CD8-positive, alpha-beta T cell (primary cell): ENCODE measurements at regions of chr20 and their contacts with region 1.

Region 1: GRCh38 chr20:63537525-63538203 is 488 bp upstream of the PTK6 start:
- DNase-seq: peak; percentile 84 to 97 (median 92)
- ATAC-seq: peak; percentile 90
- H3K4me3 ChIP-seq: peak overlapping the region; percentile 48 to 53
- H3K4me3 Mint-ChIP-seq: peak overlapping the region; percentile 75
- H3K27ac ChIP-seq: peak overlapping the region; percentile 34 to 84
- H3K27ac Mint-ChIP-seq: peak overlapping the region; percentile 81
- H3K4me1 ChIP-seq: peaks cover 22% of the 10 kb centered on the region
- H3K4me1 Mint-ChIP-seq: peaks cover 14% of the 10 kb centered on the region
- H3K27me3 ChIP-seq: no peaks in the 10 kb centered on the region
- H3K27me3 Mint-ChIP-seq: no peaks in the 10 kb centered on the region
- CTCF ChIP-seq: peak; percentile 91

Region 2: DNA sequence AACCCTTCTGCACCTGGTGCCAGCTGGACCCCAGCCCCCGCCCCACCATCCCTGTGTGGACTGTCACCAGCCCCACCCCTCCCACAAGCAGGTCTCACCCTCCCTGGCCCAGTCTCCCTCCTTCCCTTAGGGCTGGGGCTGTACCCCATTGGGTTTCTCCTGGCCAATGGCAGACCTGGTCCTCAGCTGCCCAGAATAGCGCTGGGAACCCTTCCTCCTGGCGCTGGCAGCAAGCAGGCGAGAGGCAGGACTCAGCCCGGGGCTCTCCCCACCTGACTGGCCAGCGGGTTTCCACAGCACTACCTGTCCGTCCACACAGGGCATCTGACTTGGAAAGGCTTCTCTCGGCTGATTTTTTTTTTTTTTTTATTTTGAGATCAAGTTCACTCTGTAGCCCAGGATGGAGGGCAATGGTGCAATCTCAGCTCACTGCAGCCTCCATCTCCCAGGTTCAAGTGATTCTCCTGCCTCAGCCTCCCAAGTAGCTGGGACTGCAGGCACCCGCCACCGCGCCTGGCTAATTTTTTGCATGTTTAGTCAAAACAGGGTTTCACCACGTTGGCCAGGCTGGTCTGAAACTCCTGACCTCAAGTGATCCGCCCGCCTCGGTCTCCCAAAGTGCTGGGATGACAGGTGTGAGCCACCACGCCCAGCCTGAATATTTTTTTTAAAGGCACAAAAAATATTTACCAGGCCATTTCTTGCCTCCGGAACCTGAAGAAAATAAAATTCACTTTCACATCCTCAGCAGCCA is 154.9 kb before region 1 on chr20:
- CTCF ChIA-PET with region 1: no interaction called
- POLR2A ChIA-PET with region 1: no interaction called
- intact Hi-C with region 1: no loop called
- DNase-seq: peak in 1 of 9 experiments; percentile 14
- ATAC-seq: no peak
- H3K4me3 ChIP-seq: no peak overlapping the region
- H3K4me3 Mint-ChIP-seq: no peak overlapping the region
- H3K27ac ChIP-seq: no peak overlapping the region
- H3K27ac Mint-ChIP-seq: no peak overlapping the region
- H3K4me1 ChIP-seq: no peaks in the 10 kb centered on the region
- H3K4me1 Mint-ChIP-seq: no peaks in the 10 kb centered on the region
- H3K27me3 ChIP-seq: no peaks in the 10 kb centered on the region
- H3K27me3 Mint-ChIP-seq: peaks cover 9% of the 10 kb centered on the region
- CTCF ChIP-seq: no peak

Region 3: GRCh38 chr20:63567386-63568169 is 29.9 kb after region 1 on chr20:
- CTCF ChIA-PET with region 1: interaction called, 24 read pairs
- POLR2A ChIA-PET with region 1: interaction called, 5 read pairs
- intact Hi-C with region 1: no loop called
- DNase-seq: peak; percentile 32 to 83 (median 62)
- ATAC-seq: peak; percentile 65
- H3K4me3 ChIP-seq: peak overlapping the region; percentile 34 to 59
- H3K4me3 Mint-ChIP-seq: peak overlapping the region; percentile 77
- H3K27ac ChIP-seq: peak overlapping the region; percentile 23 to 56
- H3K27ac Mint-ChIP-seq: peak overlapping the region; percentile 49
- H3K4me1 ChIP-seq: peaks cover 25% of the 10 kb centered on the region
- H3K4me1 Mint-ChIP-seq: peaks cover 21% of the 10 kb centered on the region
- H3K27me3 ChIP-seq: peaks cover 0 to 3% of the 10 kb centered on the region in 2 experiments
- H3K27me3 Mint-ChIP-seq: no peaks in the 10 kb centered on the region
- CTCF ChIP-seq: no peak

Region 4: DNA sequence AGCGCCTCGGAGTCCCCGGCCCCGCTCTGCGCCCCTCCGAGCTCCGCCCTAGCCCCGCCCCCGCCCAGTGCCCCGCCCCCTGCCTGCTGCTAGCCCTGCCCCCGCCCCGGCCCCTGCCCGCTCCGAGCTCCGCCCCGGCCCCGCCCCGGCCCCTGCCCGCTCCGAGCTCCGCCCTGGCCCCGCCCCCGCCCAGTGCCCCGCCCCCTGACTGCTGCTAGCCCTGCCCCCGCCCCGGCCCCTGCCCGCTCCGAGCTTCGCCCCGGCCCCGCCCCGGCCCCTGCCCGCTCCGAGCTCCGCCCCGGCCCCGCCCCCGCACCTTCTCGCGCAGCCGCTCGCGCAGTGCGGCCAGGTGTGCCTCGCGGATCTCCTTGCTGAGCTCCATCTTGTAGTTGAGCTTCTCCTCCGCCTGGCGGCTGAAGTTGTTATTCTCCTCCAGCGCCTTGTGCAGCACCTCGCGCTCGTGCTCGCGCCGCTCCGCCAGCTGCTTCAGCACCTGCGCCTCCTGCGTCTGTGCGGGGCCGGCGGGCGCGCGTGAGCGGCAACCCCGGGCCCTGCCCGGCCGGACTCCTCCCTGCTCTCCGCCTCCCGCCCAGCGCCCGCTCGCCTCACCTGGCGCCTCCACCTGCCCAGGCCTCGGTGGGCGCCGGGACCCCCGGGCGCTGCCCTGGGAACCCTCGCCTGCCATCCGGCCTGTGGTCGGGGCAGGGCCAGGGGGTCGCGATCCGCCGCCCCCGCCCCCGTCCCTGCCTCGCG is 104.3 kb after region 1 on chr20:
- CTCF ChIA-PET with region 1: interaction called, 19 read pairs
- POLR2A ChIA-PET with region 1: interaction called, 11 read pairs
- intact Hi-C with region 1: loop called (anchors 1 to 2 kb)
- DNase-seq: peak; percentile 96 to 99 (median 97)
- ATAC-seq: peak; percentile 67
- H3K4me3 ChIP-seq: peak overlapping the region; percentile 90 to 98
- H3K4me3 Mint-ChIP-seq: peak overlapping the region; percentile 83
- H3K27ac ChIP-seq: peak overlapping the region; percentile 83 to 94
- H3K27ac Mint-ChIP-seq: peak overlapping the region; percentile 37
- H3K4me1 ChIP-seq: peaks cover 27% of the 10 kb centered on the region
- H3K4me1 Mint-ChIP-seq: peaks cover 24% of the 10 kb centered on the region
- H3K27me3 ChIP-seq: no peaks in the 10 kb centered on the region
- H3K27me3 Mint-ChIP-seq: no peaks in the 10 kb centered on the region
- CTCF ChIP-seq: peak; percentile 53

Region 5: DNA sequence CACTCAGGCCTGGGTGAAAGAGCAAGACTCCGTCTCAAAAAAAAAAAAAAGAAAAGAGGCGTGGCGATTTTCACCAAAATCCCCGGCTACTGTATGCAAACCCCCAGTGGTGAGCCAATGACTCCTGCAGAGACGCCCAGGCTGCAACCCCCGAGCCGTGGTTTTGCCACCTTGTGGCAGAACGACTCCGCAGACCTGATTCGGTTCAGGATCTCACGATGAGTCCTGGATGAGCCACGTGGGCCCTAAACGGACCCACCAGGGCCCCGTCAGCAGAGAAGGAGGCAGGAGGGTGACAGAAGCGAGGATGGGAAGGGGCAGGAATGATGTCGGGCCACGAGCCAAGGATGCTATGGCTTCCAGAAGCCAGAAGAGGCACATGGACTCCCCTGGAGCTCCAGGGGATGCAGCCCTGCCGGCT is 244.4 kb after region 1 on chr20:
- CTCF ChIA-PET with region 1: interaction called, 4 read pairs
- POLR2A ChIA-PET with region 1: no interaction called
- intact Hi-C with region 1: loop called (anchors 1 kb)
- DNase-seq: peak in 8 of 9 experiments; percentile 11 to 93 (median 76)
- ATAC-seq: peak; percentile 94
- H3K4me3 ChIP-seq: no peak overlapping the region
- H3K4me3 Mint-ChIP-seq: peak overlapping the region; percentile 39
- H3K27ac ChIP-seq: peak overlapping the region in 1 of 2 experiments; percentile 50
- H3K27ac Mint-ChIP-seq: peak overlapping the region; percentile 81
- H3K4me1 ChIP-seq: peaks cover 12% of the 10 kb centered on the region
- H3K4me1 Mint-ChIP-seq: peaks cover 18% of the 10 kb centered on the region
- H3K27me3 ChIP-seq: no peaks in the 10 kb centered on the region
- H3K27me3 Mint-ChIP-seq: no peaks in the 10 kb centered on the region
- CTCF ChIP-seq: peak; percentile 23

Region 6: GRCh38 chr20:63973636-63974402 is 436.2 kb after region 1 on chr20:
- CTCF ChIA-PET with region 1: interaction called, 5 read pairs
- POLR2A ChIA-PET with region 1: no interaction called
- intact Hi-C with region 1: loop called (anchors 1 to 5 kb)
- DNase-seq: peak; percentile 57 to 87 (median 77)
- ATAC-seq: peak; percentile 51
- H3K4me3 ChIP-seq: no peak overlapping the region
- H3K4me3 Mint-ChIP-seq: no peak overlapping the region
- H3K27ac ChIP-seq: no peak overlapping the region
- H3K27ac Mint-ChIP-seq: peak overlapping the region; percentile 53
- H3K4me1 ChIP-seq: peaks cover 35% of the 10 kb centered on the region
- H3K4me1 Mint-ChIP-seq: peaks cover 42% of the 10 kb centered on the region
- H3K27me3 ChIP-seq: no peaks in the 10 kb centered on the region
- H3K27me3 Mint-ChIP-seq: no peaks in the 10 kb centered on the region
- CTCF ChIP-seq: peak; percentile 99